ENCODE measurements at regions of chr1 and their contacts with region 1.

Region 1: DNA sequence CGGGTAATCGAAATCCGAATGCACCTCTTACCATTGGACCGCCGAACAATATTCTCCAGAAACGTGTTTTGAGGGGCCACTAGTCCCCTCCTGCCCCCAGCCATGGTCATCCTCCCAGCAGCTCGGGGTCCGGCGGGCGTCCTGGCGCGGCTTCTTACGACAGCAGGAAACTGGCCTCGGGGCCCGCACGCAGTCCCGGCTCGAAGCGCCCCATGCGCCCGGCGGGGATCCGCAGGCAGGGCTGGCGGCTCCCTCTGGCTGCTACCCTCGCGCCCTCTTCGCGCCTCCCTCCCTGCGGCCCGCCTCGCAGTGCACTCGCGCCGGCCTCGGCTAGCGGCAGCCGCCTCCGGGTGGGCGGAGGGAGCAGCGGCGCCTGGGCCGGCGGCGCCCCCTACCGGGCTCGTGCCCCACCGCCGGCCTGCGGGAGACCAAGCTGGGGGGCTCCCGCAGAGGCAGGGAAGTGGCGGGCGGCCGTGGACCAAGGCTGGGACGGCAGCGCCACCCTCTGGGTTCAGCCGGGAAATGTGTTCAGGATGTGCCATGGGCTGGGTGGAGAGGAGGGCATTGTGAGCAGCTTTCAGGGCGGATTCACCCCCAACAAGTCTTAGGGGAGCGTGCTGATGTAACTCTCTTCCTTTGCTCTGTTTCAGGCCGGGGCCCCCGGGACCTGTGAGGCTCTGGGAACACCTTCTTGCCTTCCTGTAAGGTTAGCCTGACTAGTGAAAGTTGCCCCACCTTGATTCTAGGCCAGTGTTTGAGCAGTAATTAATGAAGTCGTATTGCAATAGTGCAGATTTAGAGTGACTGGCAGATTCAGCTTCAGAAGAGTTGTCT is at the start of gene KCNH1:
- DNase-seq: peak; percentile 96
- H3K4me3 ChIP-seq: peak within 1 kb of the TSS; percentile 61 to 72
- H3K27ac ChIP-seq: peak within 1 kb of the TSS in 1 of 2 experiments; percentile 68; a peak in 2 of 4 replicates
- H3K4me1 ChIP-seq: peaks cover 0 to 13% of the 10 kb centered on the region in 2 experiments; a peak in 2 of 4 replicates
- H3K27me3 ChIP-seq: peaks cover 27% of the 10 kb centered on the region
- CTCF ChIP-seq: peak; percentile 95
- EP300 ChIP-seq: no peak; a peak in 2 of 4 replicates
- RAD21 ChIP-seq: peak; percentile 95
- polyA plus RNA-seq, gene KCNH1: 0.08 and 0.26 TPM in 2 replicates

Region 2: GRCh38 chr1:210428696-210429095 is 705.4 kb before region 1 on chr1:
- CTCF ChIA-PET with region 1: interaction called, 26 read pairs
- POLR2A ChIA-PET with region 1: no interaction called
- DNase-seq: no peak
- H3K4me3 ChIP-seq: no peak overlapping the region
- H3K27ac ChIP-seq: no peak overlapping the region
- H3K4me1 ChIP-seq: no peaks in the 10 kb centered on the region
- H3K27me3 ChIP-seq: no peaks in the 10 kb centered on the region
- CTCF ChIP-seq: no peak
- EP300 ChIP-seq: no peak
- RAD21 ChIP-seq: no peak

Region 3: GRCh38 chr1:210527091-210527490 is 607.0 kb before region 1 on chr1:
- CTCF ChIA-PET with region 1: interaction called, 11 read pairs
- POLR2A ChIA-PET with region 1: no interaction called
- DNase-seq: no peak
- H3K4me3 ChIP-seq: no peak overlapping the region
- H3K27ac ChIP-seq: no peak overlapping the region
- H3K4me1 ChIP-seq: peaks cover 0 to 30% of the 10 kb centered on the region in 2 experiments; a peak in 2 of 4 replicates
- H3K27me3 ChIP-seq: no peaks in the 10 kb centered on the region
- CTCF ChIP-seq: no peak
- EP300 ChIP-seq: no peak
- RAD21 ChIP-seq: no peak

Region 4: DNA sequence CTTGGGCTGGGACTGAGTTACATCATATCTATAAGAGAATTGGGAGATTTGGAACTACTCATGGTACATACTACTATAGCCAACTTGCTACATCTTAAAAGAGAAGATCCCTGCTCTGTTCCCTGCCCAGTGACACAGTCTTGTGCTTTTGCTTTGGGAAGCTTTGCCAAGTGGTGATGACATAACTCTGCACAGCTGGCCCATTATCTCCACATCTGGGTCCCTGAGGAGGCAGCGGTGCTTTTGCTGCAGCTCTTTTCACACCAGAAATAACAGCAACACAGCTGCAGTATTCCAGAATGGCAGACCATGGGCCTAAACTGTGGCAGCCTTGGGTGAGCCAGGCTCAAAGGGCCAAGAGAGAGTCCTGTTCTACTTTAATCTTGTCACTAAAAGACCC is 509.3 kb before region 1 on chr1:
- CTCF ChIA-PET with region 1: interaction called, 10 read pairs
- POLR2A ChIA-PET with region 1: no interaction called
- DNase-seq: peak; percentile 41
- H3K4me3 ChIP-seq: no peak overlapping the region
- H3K27ac ChIP-seq: no peak overlapping the region
- H3K4me1 ChIP-seq: peaks cover 0 to 17% of the 10 kb centered on the region in 2 experiments; a peak in 1 of 4 replicates
- H3K27me3 ChIP-seq: no peaks in the 10 kb centered on the region
- CTCF ChIP-seq: no peak
- EP300 ChIP-seq: no peak
- RAD21 ChIP-seq: no peak

Region 5: GRCh38 chr1:210726621-210727020 is 407.4 kb before region 1 on chr1:
- CTCF ChIA-PET with region 1: interaction called, 41 read pairs
- POLR2A ChIA-PET with region 1: interaction called, 4 read pairs
- DNase-seq: no peak
- H3K4me3 ChIP-seq: no peak overlapping the region
- H3K27ac ChIP-seq: no peak overlapping the region
- H3K4me1 ChIP-seq: peaks cover 0 to 31% of the 10 kb centered on the region in 2 experiments; a peak in 2 of 4 replicates
- H3K27me3 ChIP-seq: no peaks in the 10 kb centered on the region
- CTCF ChIP-seq: no peak
- EP300 ChIP-seq: no peak
- RAD21 ChIP-seq: no peak

Region 6: GRCh38 chr1:211145944-211146343 is 11.9 kb after region 1 on chr1:
- CTCF ChIA-PET with region 1: interaction called, 36 read pairs
- POLR2A ChIA-PET with region 1: no interaction called
- DNase-seq: no peak
- H3K4me3 ChIP-seq: no peak overlapping the region
- H3K27ac ChIP-seq: no peak overlapping the region
- H3K4me1 ChIP-seq: no peaks in the 10 kb centered on the region; a peak in 1 of 4 replicates
- H3K27me3 ChIP-seq: no peaks in the 10 kb centered on the region
- CTCF ChIP-seq: no peak
- EP300 ChIP-seq: no peak
- RAD21 ChIP-seq: no peak